Activated CD8-positive, alpha-beta T cell treated with anti-CD3 and anti-CD28 coated beads, Interleukin-2, amount 10 ng/mL, durations not matched to agents 7 days and 5 days (primary cell): ENCODE measurements at regions of chr2 and their contacts with region 1.

Region 1: GRCh38 chr2:230326453-230327417 is at the start of gene SP140L:
- DNase-seq: peak; percentile 92
- ATAC-seq: peak; percentile 98
- H3K4me3 Mint-ChIP-seq: peak within 1 kb of the TSS; percentile 96
- H3K27ac Mint-ChIP-seq: peak within 1 kb of the TSS; percentile 96
- H3K4me1 Mint-ChIP-seq: peaks cover 74% of the 10 kb centered on the region
- H3K27me3 Mint-ChIP-seq: no peaks in the 10 kb centered on the region
- total RNA-seq, gene SP140L: 90.5 to 96.2 TPM

Region 2: DNA sequence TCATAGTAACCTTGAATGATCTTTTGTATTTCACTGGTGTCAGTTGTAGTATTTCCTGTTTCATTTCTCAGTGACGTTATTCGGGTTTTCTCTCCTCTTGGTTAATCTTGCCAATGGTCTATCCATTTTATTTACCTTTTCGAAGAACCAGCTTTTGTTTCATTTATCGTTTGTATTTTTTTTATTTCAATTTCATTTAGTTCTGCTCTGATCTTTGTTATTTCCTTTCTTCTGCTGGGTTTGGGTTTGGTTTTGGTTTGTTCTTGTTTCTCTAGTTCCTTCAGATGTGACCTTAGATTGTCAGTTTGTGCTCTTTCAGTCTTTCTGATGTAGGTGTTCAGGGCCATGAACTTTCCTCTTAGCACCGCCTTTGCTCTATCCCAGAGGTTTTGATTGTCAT is 64.5 kb before region 1 on chr2:
- CTCF ChIA-PET with region 1: interaction called, 5 read pairs
- POLR2A ChIA-PET with region 1: interaction called, 13 read pairs
- DNase-seq: no peak
- ATAC-seq: peak; percentile 69
- H3K4me3 Mint-ChIP-seq: peak overlapping the region; percentile 47
- H3K27ac Mint-ChIP-seq: peak overlapping the region; percentile 84
- H3K4me1 Mint-ChIP-seq: peaks cover 66% of the 10 kb centered on the region
- H3K27me3 Mint-ChIP-seq: no peaks in the 10 kb centered on the region

Region 3: DNA sequence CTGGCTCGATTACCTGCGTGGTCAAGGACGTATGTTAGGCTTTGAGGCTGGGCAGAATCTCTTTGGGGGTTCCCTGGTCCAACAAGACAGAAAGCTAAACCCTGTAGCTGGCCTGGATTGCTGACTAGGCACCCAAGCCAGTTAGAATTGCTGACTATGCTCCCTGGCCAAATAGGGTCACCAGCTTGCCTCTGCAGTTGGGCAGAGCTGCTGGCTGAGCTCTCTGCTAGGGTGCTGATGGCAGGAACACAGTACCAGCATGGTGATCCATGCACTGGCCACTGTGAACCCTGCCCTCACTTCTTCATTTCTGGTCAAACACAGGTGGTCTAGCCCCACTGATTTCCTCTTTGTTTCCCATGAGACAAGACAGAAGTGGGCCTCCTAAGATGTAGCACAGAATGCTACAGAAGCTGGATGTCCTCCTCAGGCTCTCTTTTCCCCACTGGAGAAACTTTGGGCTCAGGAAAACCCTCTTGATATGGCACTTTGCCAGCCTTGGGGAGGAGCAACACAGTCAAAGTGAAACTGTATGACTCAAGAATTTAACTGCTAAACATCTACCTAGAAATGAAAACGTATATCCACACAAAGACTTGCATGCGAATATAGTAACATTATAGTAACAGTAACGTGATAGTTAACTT is 21.0 kb after region 1 on chr2:
- CTCF ChIA-PET with region 1: interaction called, 10 read pairs
- POLR2A ChIA-PET with region 1: interaction called, 6 read pairs
- DNase-seq: peak; percentile 57
- ATAC-seq: peak; percentile 65
- H3K4me3 Mint-ChIP-seq: peak overlapping the region; percentile 61
- H3K27ac Mint-ChIP-seq: peak overlapping the region; percentile 91
- H3K4me1 Mint-ChIP-seq: peaks cover 72% of the 10 kb centered on the region
- H3K27me3 Mint-ChIP-seq: no peaks in the 10 kb centered on the region

Region 4: DNA sequence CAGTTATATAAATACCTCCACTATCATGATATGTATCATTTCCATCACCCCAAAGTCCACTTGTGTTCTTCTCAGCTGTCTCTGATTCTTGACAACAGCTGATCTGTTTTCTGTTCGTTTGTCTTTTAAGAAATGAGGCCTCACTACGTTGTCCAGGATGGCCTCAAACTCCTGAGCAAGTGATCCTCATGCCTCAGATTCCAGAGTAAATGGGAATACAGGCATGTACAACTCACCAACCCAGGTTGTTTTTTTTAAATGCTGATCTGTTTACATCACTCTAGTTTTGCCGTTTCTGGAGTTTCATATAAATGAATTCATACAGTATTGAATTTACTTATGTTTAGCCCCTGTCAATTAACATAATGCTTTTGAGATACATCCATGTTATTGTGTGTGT is 50.3 kb after region 1 on chr2:
- CTCF ChIA-PET with region 1: no interaction called
- POLR2A ChIA-PET with region 1: no interaction called
- DNase-seq: no peak
- ATAC-seq: no peak
- H3K4me3 Mint-ChIP-seq: no peak overlapping the region
- H3K27ac Mint-ChIP-seq: no peak overlapping the region
- H3K4me1 Mint-ChIP-seq: peaks cover 9% of the 10 kb centered on the region
- H3K27me3 Mint-ChIP-seq: no peaks in the 10 kb centered on the region

Region 5: GRCh38 chr2:230411570-230412370 is 85.0 kb after region 1 on chr2:
- CTCF ChIA-PET with region 1: interaction called, 7 read pairs
- POLR2A ChIA-PET with region 1: interaction called, 40 read pairs
- DNase-seq: peak; percentile 72
- ATAC-seq: peak; percentile 79
- H3K4me3 Mint-ChIP-seq: peak overlapping the region; percentile 99
- H3K27ac Mint-ChIP-seq: peak overlapping the region; percentile 100
- H3K4me1 Mint-ChIP-seq: peaks cover 82% of the 10 kb centered on the region
- H3K27me3 Mint-ChIP-seq: no peaks in the 10 kb centered on the region

Region 6: GRCh38 chr2:230485801-230486341 is 159.1 kb after region 1 on chr2:
- CTCF ChIA-PET with region 1: no interaction called
- POLR2A ChIA-PET with region 1: no interaction called
- DNase-seq: no peak
- ATAC-seq: no peak
- H3K4me3 Mint-ChIP-seq: no peak overlapping the region
- H3K27ac Mint-ChIP-seq: no peak overlapping the region
- H3K4me1 Mint-ChIP-seq: peaks cover 5% of the 10 kb centered on the region
- H3K27me3 Mint-ChIP-seq: no peaks in the 10 kb centered on the region

Region 7: GRCh38 chr2:230658877-230659652 is 332.3 kb after region 1 on chr2:
- CTCF ChIA-PET with region 1: no interaction called
- POLR2A ChIA-PET with region 1: no interaction called
- DNase-seq: peak; percentile 90
- ATAC-seq: peak; percentile 65
- H3K4me3 Mint-ChIP-seq: peak overlapping the region; percentile 86
- H3K27ac Mint-ChIP-seq: peak overlapping the region; percentile 99
- H3K4me1 Mint-ChIP-seq: peaks cover 98% of the 10 kb centered on the region
- H3K27me3 Mint-ChIP-seq: no peaks in the 10 kb centered on the region